ENCODE measurements at regions of chrX and their contacts with region 1.

Region 1: DNA sequence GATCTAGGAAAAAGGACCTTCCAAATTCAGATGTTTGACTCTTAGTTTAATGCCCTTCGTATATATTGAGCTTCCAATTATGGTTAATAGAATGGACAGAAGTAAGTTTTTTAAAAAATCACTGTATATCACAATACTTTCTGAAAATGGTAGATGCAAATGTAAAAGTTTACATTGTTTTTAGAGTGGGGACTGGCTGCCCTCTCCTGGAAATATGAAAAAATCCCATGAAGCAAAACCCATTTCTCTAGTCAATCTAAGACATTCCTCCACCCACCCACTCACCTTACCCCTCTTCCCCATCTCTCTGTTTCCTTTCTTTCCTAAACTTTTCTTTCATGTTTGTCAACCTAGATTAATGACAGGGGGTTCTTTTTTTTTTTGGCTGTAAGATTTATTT is 134.5 kb downstream of the ARHGAP6 start:
- DNase-seq: no peak
- H3K4me3 ChIP-seq: no peak overlapping the region
- H3K27ac ChIP-seq: no peak overlapping the region
- H3K4me1 ChIP-seq: no peaks in the 10 kb centered on the region
- H3K27me3 ChIP-seq: no peaks in the 10 kb centered on the region
- CTCF ChIP-seq: peak; percentile 58
- EP300 ChIP-seq: no peak
- RAD21 ChIP-seq: peak; percentile 62

Region 2: DNA sequence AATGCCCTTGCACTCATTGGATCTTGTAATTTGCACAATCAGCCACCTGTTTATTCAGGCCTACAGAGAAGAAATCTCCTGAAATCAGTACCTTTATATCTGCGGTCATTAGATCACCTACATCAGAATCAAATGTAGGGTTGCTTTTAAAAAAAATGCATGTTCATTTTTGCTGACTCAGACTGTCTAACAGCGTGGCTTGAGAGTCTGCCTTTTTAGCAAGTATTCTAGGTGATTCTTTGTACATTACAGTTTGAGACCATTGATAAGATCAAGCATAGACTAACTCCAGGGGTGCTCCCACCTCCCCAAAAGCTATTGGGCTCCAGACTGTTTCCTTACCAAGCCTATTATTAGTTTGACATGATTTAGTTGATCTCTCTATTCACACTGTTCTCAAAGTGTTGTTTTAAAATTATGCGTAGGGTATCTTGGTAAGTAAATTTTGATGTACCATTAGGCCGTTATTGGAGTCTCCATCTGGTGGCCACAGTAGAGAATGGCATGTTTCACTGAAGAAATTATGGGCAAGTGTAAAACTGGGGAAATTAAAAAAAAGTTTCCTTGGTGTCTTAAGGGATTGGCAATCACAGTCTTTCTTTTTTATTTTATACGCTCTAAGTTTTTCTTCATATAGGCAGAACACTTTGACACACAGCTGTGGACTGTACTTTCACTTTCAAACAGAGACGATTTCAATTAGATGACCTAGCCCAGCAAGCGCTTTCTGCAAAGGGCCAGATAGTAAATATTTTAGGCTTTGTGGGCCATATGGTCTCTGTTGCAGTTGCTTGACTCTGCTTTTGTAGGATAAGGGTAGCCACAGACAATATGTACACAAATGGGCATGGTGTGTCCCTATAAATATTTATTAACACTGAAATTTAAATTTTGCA is 193.1 kb after region 1 on chrX:
- CTCF ChIA-PET with region 1: interaction called, 11 read pairs
- POLR2A ChIA-PET with region 1: no interaction called
- DNase-seq: peak; percentile 42
- H3K4me3 ChIP-seq: no peak overlapping the region
- H3K27ac ChIP-seq: no peak overlapping the region
- H3K4me1 ChIP-seq: no peaks in the 10 kb centered on the region
- H3K27me3 ChIP-seq: no peaks in the 10 kb centered on the region; the same call in 1 of the 2 replicates
- CTCF ChIP-seq: peak; percentile 90
- EP300 ChIP-seq: no peak
- RAD21 ChIP-seq: peak; percentile 65

Measured in SK-N-SH (cell line).